ENCODE measurements at regions of chr1 and their contacts with region 1.

Region 1: DNA sequence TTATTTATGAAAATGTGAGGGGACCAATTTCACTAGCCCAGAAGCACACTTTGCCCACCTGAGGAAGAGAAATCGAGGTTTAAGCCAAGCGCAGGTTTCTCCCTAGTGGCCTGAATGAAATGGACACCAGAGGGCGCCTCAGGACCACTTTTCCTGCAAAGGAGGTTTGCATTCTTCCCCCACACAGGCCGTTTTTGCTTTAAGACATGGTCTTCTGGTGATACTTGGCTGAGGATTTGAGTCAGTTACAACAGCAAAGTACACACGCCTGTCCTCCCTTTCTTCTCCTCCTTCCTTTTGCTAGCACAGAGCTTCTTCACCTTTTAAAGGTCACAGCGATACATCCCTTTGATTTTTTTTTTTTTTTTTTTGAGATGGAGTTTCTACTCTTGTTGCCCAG is 5.4 kb downstream of the PLA2G2E start:
- DNase-seq: peak; percentile 80 to 87 (median 84)
- ATAC-seq: peak; percentile 76
- H3K4me3 ChIP-seq: no peak overlapping the region
- H3K27ac ChIP-seq: no peak overlapping the region
- H3K4me1 ChIP-seq: no peaks in the 10 kb centered on the region
- H3K27me3 ChIP-seq: no peaks in the 10 kb centered on the region
- CTCF ChIP-seq: peak; percentile 64 to 91 (median 88)
- POLR2A ChIP-seq: no peak

Region 2: DNA sequence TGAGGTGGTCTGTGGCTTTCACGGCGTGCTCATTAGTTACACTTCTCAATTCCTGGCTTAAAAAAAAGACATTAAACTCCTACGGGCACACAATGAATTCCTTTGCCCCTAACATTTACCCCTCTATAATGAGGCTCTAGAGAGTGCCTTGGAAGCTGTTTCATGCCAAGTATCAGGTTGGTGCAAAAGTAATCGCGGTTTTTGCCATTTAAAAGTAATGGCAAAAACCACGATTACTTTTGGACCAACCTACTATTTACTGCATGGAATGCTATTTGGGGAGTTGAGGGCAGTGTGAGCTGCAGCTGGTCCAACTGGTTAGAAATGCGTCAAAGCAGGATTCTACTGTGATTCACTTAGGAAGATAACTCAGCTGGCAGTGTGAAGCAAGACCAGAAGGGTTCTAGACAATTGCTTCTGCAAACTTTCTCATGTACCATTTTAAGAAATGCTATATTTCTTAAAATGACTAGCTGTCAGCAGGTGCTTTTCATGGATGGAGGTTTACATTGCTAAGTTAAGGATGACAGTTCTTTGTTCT is 289.4 kb after region 1 on chr1:
- intact Hi-C with region 1: loop called (anchors 10 kb)
- DNase-seq: no peak
- ATAC-seq: no peak
- H3K4me3 ChIP-seq: no peak overlapping the region
- H3K27ac ChIP-seq: no peak overlapping the region
- H3K4me1 ChIP-seq: peaks cover 2% of the 10 kb centered on the region
- H3K27me3 ChIP-seq: no peaks in the 10 kb centered on the region
- CTCF ChIP-seq: no peak
- POLR2A ChIP-seq: no peak

Measured in body of pancreas (tissue), 4 donors.